ENCODE measurements at regions of chr6 and their contacts with region 1.

Region 1: GRCh38 chr6:21079468-21080048 is 514.0 kb upstream of the SOX4 start:
- DNase-seq: no peak
- H3K4me3 Mint-ChIP-seq: no peak overlapping the region
- H3K27ac Mint-ChIP-seq: no peak overlapping the region
- H3K4me1 Mint-ChIP-seq: peaks cover 16% of the 10 kb centered on the region
- H3K27me3 Mint-ChIP-seq: no peaks in the 10 kb centered on the region
- CTCF ChIP-seq: no peak

Region 2: DNA sequence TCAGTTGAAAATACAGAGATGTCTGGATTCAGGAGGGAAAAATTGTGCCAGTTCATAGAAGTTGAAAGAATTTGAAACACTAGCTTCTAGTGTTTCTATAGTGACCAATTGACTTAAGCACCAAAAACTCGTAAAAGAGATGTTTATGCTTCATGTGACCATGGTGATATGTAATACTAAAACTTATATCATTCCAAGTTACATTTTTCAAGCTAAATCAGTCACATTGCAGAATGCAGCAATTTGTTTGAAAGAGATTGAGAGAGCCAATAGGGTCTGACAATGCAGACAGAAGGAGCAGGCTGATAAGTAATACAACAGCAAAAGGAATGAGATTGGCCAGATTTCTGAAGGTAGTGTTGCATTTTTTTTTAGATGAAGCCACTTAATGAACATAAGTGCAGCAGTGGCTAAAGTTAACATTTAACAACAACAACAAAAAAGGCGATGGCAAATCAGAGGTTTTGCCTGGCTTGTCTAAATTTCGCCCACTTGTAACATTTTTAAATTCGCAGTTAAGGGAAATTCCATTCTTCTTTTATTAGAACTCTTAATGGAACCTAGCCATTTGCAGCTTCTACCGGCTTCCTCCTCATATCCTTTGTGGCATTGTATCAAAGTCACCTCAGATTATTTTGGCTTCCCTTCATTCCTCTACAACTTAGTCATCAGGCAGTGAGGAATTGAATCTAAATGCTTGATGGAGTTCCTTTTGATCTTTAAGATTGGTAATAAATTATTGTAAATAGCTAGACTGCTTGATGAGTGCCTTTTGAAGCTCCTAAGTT is 30.0 kb after region 1 on chr6:
- CTCF ChIA-PET with region 1: no interaction called
- intact Hi-C with region 1: loop called (anchors 2 kb)
- DNase-seq: no peak
- H3K4me3 Mint-ChIP-seq: peak overlapping the region; percentile 7
- H3K27ac Mint-ChIP-seq: peak overlapping the region; percentile 77
- H3K4me1 Mint-ChIP-seq: peaks cover 38% of the 10 kb centered on the region
- H3K27me3 Mint-ChIP-seq: no peaks in the 10 kb centered on the region
- CTCF ChIP-seq: no peak